Endothelial cell of umbilical vein (primary cell): ENCODE measurements at regions of chr5 and their contacts with region 1.

Region 1: GRCh38 chr5:178075840-178076548 is 37.3 kb upstream of the N4BP3 start:
- DNase-seq: peak; percentile 73
- H3K4me3 ChIP-seq: peak overlapping the region in 1 of 3 experiments; percentile 20
- H3K27ac ChIP-seq: no peak overlapping the region
- H3K4me1 ChIP-seq: no peaks in the 10 kb centered on the region
- H3K27me3 ChIP-seq: no peaks in the 10 kb centered on the region
- CTCF ChIP-seq: peak; percentile 83 to 91
- POLR2A ChIP-seq: no peak

Region 2: DNA sequence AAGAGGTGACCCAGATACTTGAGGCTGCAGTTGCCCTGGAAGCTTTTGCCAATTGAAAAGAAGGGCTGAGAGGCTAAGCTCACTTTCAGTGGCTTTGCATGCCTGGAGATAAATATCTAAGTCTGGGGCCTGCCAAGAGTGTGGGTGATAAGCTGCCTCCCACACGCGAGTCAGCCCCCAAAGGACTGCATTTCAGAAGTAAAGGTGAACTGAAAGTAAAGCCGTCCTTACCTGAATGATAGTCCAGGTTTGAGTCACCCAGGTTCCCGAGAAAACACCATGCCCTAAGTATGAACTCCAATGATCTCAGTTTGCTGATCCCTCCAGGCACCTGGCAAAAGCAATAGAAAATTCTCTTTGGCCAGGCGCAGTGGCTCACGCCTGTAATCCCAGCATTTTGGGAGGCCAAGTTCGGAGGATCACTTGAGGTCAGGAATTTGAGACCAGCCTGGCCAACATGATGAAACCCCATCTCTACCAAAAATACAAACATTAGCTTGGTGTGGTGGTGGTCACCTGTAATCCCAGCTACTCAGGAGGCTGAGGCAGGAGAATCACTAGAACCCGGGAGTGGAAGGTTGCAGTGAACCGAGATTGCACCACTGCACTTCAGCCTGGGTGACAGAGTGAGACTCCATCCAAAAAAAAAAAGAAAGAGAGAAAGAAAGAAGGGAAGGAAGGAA is 15.0 kb after region 1 on chr5:
- CTCF ChIA-PET with region 1: interaction called, 16 read pairs
- POLR2A ChIA-PET with region 1: no interaction called
- dilution Hi-C with region 1: no loop called
- intact Hi-C with region 1: no loop called
- DNase-seq: no peak
- H3K4me3 ChIP-seq: no peak overlapping the region
- H3K27ac ChIP-seq: no peak overlapping the region
- H3K4me1 ChIP-seq: no peaks in the 10 kb centered on the region
- H3K27me3 ChIP-seq: peaks cover 0 to 3% of the 10 kb centered on the region in 2 experiments
- CTCF ChIP-seq: no peak
- POLR2A ChIP-seq: no peak

Region 3: DNA sequence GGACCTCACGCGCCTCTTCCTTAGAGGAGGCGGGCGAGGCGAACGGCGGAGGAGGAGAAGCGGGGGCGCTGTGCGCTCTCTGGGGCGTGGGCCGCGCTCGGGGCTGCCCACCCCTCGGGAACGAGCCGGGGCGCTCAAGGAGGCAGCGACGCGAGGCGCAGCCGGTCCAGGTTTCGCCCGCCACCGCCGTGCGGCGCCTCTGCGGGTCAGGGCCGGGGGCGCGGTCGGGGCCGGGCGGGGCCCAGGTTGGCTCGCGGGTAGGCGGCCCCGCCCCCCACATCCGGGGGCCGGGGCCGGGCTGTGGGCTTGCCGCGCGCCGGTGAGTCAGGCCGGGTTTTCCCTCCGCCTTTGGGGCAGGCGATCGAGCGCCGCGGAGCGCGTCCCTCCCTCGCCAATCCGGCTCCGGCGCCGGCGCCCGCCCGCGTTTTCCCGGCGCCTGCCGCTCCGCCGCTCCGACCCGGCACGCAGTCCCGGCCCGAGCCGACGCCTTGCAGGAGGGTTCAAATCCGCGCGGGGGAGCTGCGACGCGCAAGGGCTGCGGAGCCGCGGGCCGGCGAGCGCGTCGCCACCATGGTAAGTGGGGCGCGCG is 37.3 kb after region 1 on chr5 and contains the start of gene N4BP3:
- CTCF ChIA-PET with region 1: interaction called, 26 read pairs
- POLR2A ChIA-PET with region 1: no interaction called
- dilution Hi-C with region 1: no loop called
- intact Hi-C with region 1: loop called (anchors 2 kb)
- DNase-seq: peak; percentile 56
- H3K4me3 ChIP-seq: peak within 1 kb of the TSS; percentile 20 to 94 (median 69)
- H3K27ac ChIP-seq: no peak within 1 kb of the TSS
- H3K4me1 ChIP-seq: peaks cover 37% of the 10 kb centered on the region
- H3K27me3 ChIP-seq: no peaks in the 10 kb centered on the region
- CTCF ChIP-seq: peak; percentile 3 to 7
- POLR2A ChIP-seq: no peak
- total RNA-seq, gene N4BP3: 38.2 and 40.3 TPM in 2 replicates

Region 4: DNA sequence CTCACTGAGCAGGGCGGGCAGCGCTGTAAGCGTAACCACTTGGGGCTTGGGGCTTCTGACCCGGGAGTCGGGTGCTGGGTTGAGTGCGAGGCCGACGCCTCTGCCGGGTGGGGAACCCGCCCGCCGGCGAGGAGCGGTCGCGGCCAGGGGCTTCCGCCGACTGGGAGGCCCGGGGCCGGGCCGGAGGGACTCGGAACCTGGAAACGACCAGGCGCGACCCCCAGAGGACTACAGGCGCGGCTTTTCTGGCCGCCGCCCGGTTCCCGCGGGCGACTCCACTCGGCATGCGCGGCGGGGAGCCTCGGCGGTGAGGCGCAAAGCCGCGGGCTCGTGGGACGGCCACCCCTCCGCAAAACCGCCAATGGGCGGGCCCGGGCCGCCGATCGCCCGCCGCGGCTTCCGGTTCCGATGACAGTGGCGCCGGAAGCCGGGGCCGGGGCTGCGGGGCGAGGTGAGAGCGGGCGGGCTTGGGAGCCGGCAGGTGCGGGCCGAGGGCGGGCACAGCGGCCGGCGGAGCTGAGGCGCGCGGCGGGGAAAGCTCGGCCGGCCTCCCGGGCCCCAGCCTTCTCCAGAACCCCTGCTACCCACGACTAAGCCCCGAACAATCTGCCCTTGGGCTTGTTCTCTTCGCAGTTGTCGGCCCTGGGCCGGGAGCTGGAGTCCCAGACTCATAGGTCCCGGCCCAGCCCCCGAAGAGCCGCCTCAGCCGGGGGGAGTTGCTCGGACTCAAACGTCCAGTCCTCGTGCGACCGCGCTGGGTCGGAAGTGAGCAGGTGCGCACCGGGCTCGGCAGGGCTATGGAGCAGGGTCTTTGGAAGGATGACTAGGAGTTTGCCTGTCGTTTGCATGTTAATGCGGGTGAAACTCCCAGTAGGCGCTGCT is 54.9 kb after region 1 on chr5 and contains the start of gene RMND5B:
- CTCF ChIA-PET with region 1: interaction called, 9 read pairs
- POLR2A ChIA-PET with region 1: no interaction called
- dilution Hi-C with region 1: no loop called
- intact Hi-C with region 1: loop called (anchors 1 kb)
- DNase-seq: peak; percentile 68
- H3K4me3 ChIP-seq: peak within 1 kb of the TSS; percentile 62 to 82 (median 64)
- H3K27ac ChIP-seq: peak within 1 kb of the TSS; percentile 40
- H3K4me1 ChIP-seq: peaks cover 11% of the 10 kb centered on the region
- H3K27me3 ChIP-seq: no peaks in the 10 kb centered on the region
- CTCF ChIP-seq: no peak
- POLR2A ChIP-seq: peak; percentile 70
- total RNA-seq, gene RMND5B: 34.2 and 38.2 TPM in 2 replicates

Region 5: GRCh38 chr5:178146020-178146820 is 70.2 kb after region 1 on chr5:
- CTCF ChIA-PET with region 1: interaction called, 200 read pairs
- POLR2A ChIA-PET with region 1: no interaction called
- dilution Hi-C with region 1: no loop called
- intact Hi-C with region 1: loop called (anchors 1 kb)
- DNase-seq: peak; percentile 50
- H3K4me3 ChIP-seq: no peak overlapping the region
- H3K27ac ChIP-seq: no peak overlapping the region
- H3K4me1 ChIP-seq: no peaks in the 10 kb centered on the region
- H3K27me3 ChIP-seq: no peaks in the 10 kb centered on the region
- CTCF ChIP-seq: peak; percentile 78 to 86
- POLR2A ChIP-seq: peak; percentile 18

Region 6: GRCh38 chr5:178163772-178164735 is 88.1 kb after region 1 on chr5:
- CTCF ChIA-PET with region 1: interaction called, 104 read pairs
- POLR2A ChIA-PET with region 1: no interaction called
- dilution Hi-C with region 1: no loop called
- intact Hi-C with region 1: loop called (anchors 1 kb)
- DNase-seq: peak; percentile 78
- H3K4me3 ChIP-seq: no peak overlapping the region
- H3K27ac ChIP-seq: no peak overlapping the region
- H3K4me1 ChIP-seq: no peaks in the 10 kb centered on the region
- H3K27me3 ChIP-seq: peaks cover 4% of the 10 kb centered on the region in 2 experiments
- CTCF ChIP-seq: peak; percentile 95 to 99
- POLR2A ChIP-seq: no peak

Region 7: DNA sequence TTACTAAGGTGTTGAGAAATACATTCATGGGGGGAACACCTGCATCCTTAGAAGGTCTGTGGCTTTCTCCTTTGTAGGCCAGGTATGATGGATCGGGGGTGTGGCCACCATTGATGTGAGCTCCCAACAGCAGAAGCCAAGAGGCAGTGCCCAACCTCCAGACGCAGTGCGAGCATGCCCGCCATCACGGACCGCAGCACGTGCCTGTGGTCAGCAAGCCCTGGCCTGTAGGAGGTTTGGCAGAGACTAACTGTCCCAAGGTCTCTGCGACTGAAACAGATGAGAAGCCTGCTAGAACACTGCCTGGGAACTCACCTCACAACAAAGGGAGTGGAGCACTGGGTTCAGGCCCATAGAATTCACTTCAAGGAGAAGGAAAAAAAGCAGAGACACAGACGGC is 686.4 kb after region 1 on chr5:
- CTCF ChIA-PET with region 1: no interaction called
- POLR2A ChIA-PET with region 1: no interaction called
- dilution Hi-C with region 1: no loop called
- intact Hi-C with region 1: no loop called
- DNase-seq: no peak
- H3K4me3 ChIP-seq: no peak overlapping the region
- H3K27ac ChIP-seq: no peak overlapping the region
- H3K4me1 ChIP-seq: no peaks in the 10 kb centered on the region
- H3K27me3 ChIP-seq: no peaks in the 10 kb centered on the region
- CTCF ChIP-seq: no peak
- POLR2A ChIP-seq: no peak